ENCODE measurements at regions of chr1 and their contacts with region 1.

Region 1: GRCh38 chr1:201348211-201348566 is 29.3 kb downstream of the TNNT2 start:
- DNase-seq: peak; percentile 27
- H3K4me3 ChIP-seq: no peak overlapping the region
- H3K27ac ChIP-seq: no peak overlapping the region
- H3K27me3 ChIP-seq: peaks cover 39% of the 10 kb centered on the region
- CTCF ChIP-seq: peak; percentile 84

Region 2: GRCh38 chr1:201254625-201255506 is 93.3 kb before region 1 on chr1:
- CTCF ChIA-PET with region 1: interaction called, 43 read pairs
- POLR2A ChIA-PET with region 1: no interaction called
- DNase-seq: no peak
- H3K4me3 ChIP-seq: no peak overlapping the region
- H3K27ac ChIP-seq: no peak overlapping the region
- H3K27me3 ChIP-seq: peaks cover 16% of the 10 kb centered on the region
- CTCF ChIP-seq: peak; percentile 95

Region 3: GRCh38 chr1:201266774-201267173 is 81.4 kb before region 1 on chr1:
- CTCF ChIA-PET with region 1: interaction called, 11 read pairs
- POLR2A ChIA-PET with region 1: no interaction called
- DNase-seq: peak; percentile 72
- H3K4me3 ChIP-seq: no peak overlapping the region
- H3K27ac ChIP-seq: no peak overlapping the region
- H3K27me3 ChIP-seq: no peaks in the 10 kb centered on the region
- CTCF ChIP-seq: no peak

Region 4: DNA sequence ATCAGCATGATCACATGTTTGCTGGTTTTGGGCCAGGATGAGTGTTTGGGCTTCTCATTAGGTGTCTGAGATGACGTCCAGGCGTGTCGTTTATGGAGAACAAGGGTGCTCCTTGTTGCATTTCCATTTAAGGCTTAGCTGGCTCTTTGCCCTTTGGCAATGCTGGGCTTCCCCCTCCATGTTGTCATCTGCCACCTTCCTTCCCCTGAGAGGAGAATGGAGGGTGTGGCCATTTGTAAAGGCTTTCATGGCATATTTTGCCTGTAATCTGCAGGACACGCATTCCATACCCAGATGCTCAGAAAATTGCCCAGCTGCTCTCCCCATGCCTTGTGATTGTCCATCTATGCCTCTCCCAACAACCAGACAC is 37.2 kb before region 1 on chr1:
- CTCF ChIA-PET with region 1: interaction called, 14 read pairs
- POLR2A ChIA-PET with region 1: no interaction called
- DNase-seq: no peak
- H3K4me3 ChIP-seq: no peak overlapping the region
- H3K27ac ChIP-seq: no peak overlapping the region
- H3K27me3 ChIP-seq: peaks cover 43% of the 10 kb centered on the region
- CTCF ChIP-seq: no peak

Region 5: GRCh38 chr1:201329286-201329685 is 18.9 kb before region 1 on chr1:
- CTCF ChIA-PET with region 1: interaction called, 26 read pairs
- POLR2A ChIA-PET with region 1: no interaction called
- DNase-seq: peak; percentile 13
- H3K4me3 ChIP-seq: no peak overlapping the region
- H3K27ac ChIP-seq: no peak overlapping the region
- H3K27me3 ChIP-seq: peaks cover 46% of the 10 kb centered on the region
- CTCF ChIP-seq: no peak

Region 6: DNA sequence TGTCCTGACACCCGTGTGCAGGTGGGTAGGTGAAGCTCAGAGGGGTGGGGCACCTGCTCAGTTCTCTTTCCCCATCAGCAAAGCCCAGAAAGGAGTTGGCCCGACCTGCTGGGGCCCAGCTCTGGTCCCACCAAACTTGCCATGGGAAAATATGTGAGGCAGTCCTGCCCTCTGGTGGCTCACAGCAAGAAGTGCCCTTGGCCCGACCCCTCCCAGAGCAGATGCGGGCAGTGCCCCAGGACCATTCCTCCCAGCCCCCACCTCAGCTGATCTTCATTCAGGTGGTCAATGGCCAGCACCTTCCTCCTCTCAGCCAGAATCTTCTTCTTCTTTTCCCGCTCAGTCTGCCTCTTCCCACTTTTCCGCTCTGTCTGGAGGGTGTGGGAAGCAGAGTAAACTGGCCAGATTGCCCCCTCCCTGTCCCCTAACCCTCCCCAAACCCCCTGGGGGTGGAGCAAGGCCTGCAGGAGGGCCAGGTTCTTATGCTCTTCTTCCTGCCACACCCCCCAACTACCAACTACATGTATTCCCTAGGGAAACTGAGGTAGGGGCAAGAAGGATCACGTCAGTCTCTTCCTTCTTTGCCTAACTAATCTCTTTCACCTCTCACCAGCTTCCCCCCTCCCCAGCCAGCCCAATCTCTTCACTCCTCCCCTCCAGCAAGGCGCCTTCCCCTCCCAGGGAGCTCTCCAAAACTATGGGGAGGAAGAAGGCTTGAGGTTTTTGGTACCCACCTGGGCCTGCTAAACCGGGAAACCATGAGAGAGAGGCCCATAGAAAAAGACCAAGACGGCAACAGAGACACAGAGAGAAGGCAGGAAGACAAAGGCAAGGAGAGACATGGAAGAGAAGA is 13.7 kb after region 1 on chr1:
- CTCF ChIA-PET with region 1: interaction called, 66 read pairs
- POLR2A ChIA-PET with region 1: no interaction called
- DNase-seq: no peak
- H3K4me3 ChIP-seq: no peak overlapping the region
- H3K27ac ChIP-seq: no peak overlapping the region
- H3K27me3 ChIP-seq: peaks cover 37% of the 10 kb centered on the region
- CTCF ChIP-seq: peak; percentile 84

Region 7: DNA sequence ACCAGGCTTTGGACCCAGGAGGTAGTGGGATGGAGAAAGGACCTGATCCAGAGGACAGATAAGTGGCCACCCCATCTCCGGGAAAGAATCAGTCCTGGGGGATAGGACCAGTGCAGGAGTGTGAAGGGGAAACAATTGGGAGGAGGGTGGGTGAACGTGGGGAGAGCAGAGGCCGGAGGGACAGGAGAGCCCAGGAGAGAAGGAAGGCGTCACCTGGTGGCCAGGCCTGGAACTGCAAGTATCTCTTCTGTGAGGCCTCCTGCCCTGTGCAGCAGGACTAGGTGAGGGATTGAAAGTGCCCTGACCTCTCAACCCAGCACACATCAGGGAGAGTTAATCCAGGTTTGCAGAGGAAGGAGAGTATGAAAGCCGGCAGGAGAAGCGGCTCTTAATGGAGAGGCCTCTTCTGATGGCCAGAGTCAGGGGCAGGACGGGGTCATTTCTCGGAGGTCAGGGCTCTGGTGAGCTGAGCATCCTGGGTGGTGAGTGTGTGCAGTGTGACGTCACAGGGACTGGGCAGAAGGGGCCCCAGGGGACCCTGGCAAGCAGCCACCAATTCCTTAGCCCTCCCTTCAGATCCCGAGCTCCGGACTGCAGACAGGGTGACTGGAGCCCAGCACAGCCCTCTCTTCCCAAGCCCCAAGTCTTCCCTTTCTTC is 60.1 kb after region 1 on chr1:
- CTCF ChIA-PET with region 1: interaction called, 44 read pairs
- POLR2A ChIA-PET with region 1: no interaction called
- DNase-seq: peak; percentile 43
- H3K4me3 ChIP-seq: no peak overlapping the region
- H3K27ac ChIP-seq: no peak overlapping the region
- H3K27me3 ChIP-seq: peaks cover 56% of the 10 kb centered on the region
- CTCF ChIP-seq: peak; percentile 99

Measured in AG04450 (cell line).